B cell (primary cell): ENCODE measurements at regions of chr10 and their contacts with region 1.

Region 1: DNA sequence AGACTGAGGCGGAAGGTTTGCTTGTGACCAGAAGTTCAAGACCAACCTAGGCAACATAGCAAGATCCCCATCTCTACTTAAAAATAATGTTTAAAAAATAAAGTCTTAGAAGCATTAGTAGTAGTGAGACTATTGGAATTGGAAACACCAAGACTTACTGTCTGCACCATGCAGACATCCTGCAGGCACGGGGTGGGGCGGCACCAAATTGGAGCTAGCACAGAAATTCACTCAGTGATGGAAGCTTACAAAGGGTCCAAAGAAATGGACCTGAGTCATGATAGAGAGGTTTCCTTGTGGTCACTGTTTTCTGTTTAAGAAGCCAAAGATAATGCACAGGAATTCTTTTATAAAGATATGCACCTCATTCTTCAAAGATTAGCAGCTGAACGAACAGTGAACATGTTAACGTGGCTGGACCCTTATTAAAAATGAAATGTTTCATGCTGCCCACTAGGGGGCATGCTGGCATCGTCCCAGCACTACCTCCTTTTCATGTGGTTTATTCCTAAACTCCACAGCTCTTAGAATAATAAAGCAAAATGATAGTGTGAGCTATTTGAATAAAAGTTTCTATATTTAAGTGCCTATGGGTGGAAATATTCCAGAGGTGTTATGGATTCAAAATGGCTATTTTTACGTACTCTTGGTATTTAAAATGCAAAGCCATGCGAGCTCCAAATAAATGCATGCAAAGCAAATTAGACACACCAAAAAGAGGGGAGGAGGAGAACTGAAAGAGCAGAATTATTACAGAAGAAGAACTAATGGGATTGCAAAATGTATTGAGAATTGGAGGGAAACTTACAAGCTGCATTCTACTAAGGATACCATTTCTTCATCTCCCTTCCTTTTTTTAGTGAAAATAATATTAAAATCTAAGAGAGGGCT is 28.6 kb downstream of the PDSS1 start:
- DNase-seq: peak; percentile 74
- ATAC-seq: peak; percentile 72
- H3K4me3 ChIP-seq: no peak overlapping the region
- H3K4me3 Mint-ChIP-seq: no peak overlapping the region
- H3K27ac ChIP-seq: no peak overlapping the region
- H3K27ac Mint-ChIP-seq: no peak overlapping the region
- H3K4me1 ChIP-seq: peaks cover 0 to 15% of the 10 kb centered on the region in 2 donors
- H3K4me1 Mint-ChIP-seq: peaks cover 10% of the 10 kb centered on the region
- H3K27me3 ChIP-seq: no peaks in the 10 kb centered on the region
- H3K27me3 Mint-ChIP-seq: no peaks in the 10 kb centered on the region
- CTCF ChIP-seq: peak; percentile 98

Region 2: DNA sequence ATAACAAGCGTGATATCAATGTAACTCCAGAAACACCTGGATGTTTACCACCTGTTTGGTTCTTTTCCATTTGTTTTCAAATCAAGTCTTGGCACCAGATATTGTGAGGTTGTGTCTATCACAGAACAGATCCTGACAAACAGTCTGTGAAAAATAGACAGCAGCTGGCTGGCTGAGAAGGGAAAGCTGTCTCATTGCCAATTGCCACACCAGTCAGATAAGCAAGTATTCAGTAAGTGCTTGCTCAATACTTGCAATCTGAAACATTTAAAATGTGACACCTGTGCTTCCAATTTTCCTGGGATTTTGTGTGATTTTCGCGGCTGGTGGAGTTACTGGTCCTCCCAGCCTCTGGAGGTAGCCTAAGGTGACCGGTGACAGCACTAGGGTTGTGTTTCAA is 939.9 kb before region 1 on chr10:
- CTCF ChIA-PET with region 1: no interaction called
- POLR2A ChIA-PET with region 1: interaction called, 10 read pairs
- intact Hi-C with region 1: no loop called
- DNase-seq: no peak
- ATAC-seq: no peak
- H3K4me3 ChIP-seq: no peak overlapping the region
- H3K4me3 Mint-ChIP-seq: no peak overlapping the region
- H3K27ac ChIP-seq: no peak overlapping the region
- H3K27ac Mint-ChIP-seq: no peak overlapping the region
- H3K4me1 ChIP-seq: no peaks in the 10 kb centered on the region
- H3K4me1 Mint-ChIP-seq: no peaks in the 10 kb centered on the region
- H3K27me3 ChIP-seq: peaks cover 0 to 3% (median 1%) of the 10 kb centered on the region in 4 experiments
- H3K27me3 Mint-ChIP-seq: peaks cover 23% of the 10 kb centered on the region
- CTCF ChIP-seq: no peak

Region 3: DNA sequence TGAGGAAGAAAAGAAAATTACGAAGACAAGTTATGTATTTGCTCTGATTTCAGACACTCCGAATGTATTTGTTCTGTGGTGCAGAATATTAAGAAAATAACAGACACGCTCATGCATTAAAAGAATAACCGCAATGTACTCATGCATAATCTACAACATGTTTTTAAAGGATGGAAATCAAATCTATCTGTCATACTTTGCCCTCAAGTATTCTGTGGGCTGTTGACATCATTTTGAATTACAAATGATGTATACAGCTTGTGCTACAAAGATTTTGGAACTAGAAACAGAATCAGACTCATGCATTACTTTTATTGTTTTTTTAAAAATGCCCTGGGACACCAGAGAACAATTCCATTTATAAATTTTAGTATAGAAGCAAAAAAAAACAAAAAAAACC is 218.1 kb before region 1 on chr10:
- CTCF ChIA-PET with region 1: no interaction called
- POLR2A ChIA-PET with region 1: no interaction called
- intact Hi-C with region 1: no loop called
- DNase-seq: no peak
- ATAC-seq: no peak
- H3K4me3 ChIP-seq: no peak overlapping the region
- H3K4me3 Mint-ChIP-seq: no peak overlapping the region
- H3K27ac ChIP-seq: no peak overlapping the region
- H3K27ac Mint-ChIP-seq: no peak overlapping the region
- H3K4me1 ChIP-seq: no peaks in the 10 kb centered on the region
- H3K4me1 Mint-ChIP-seq: peaks cover 14% of the 10 kb centered on the region
- H3K27me3 ChIP-seq: no peaks in the 10 kb centered on the region
- H3K27me3 Mint-ChIP-seq: no peaks in the 10 kb centered on the region
- CTCF ChIP-seq: no peak

Region 4: DNA sequence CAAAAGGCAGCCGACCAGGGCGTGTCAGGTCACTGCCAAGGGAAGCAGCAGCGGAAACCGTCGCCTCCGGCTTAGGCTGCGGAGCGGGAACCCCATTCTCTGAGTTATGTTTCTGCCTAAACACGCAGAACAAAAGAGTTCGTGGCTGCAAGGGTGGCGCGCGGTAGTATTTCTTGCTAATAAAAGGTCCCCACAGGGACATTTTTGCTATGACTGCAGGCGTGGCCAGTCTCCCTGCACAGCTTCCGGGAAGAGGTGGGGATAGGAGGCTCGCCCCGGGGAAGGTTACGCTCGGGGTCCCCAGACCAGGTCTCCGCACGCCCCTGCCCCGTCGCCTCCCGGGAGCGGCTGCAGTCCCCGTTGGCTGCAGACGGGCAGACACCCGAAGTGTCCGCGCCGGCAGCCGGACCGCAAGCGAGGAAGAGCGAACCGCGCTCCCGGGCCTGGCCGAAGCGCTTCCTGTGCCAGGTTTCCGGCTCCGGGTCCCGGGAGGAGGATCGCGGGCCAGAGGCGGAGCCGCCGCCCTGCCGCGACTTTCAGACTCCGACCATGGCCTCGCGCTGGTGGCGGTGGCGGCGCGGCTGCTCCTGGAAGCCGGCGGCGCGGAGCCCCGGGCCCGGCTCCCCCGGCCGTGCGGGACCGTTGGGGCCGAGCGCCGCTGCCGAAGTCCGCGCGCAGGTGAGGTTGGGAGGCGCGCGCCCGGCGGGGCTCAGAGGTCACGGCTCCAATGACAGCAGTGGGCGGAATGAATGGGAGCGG is 28.7 kb before region 1 on chr10 and contains the start of gene PDSS1:
- CTCF ChIA-PET with region 1: interaction called, 10 read pairs
- POLR2A ChIA-PET with region 1: no interaction called
- intact Hi-C with region 1: no loop called
- DNase-seq: peak; percentile 75
- ATAC-seq: peak; percentile 87
- H3K4me3 ChIP-seq: peak within 1 kb of the TSS; percentile 49 to 95 (median 94)
- H3K4me3 Mint-ChIP-seq: peak within 1 kb of the TSS; percentile 93
- H3K27ac ChIP-seq: peak within 1 kb of the TSS; percentile 64 to 73
- H3K27ac Mint-ChIP-seq: peak within 1 kb of the TSS; percentile 90
- H3K4me1 ChIP-seq: peaks cover 10 to 13% of the 10 kb centered on the region in 2 donors
- H3K4me1 Mint-ChIP-seq: peaks cover 18% of the 10 kb centered on the region
- H3K27me3 ChIP-seq: no peaks in the 10 kb centered on the region
- H3K27me3 Mint-ChIP-seq: no peaks in the 10 kb centered on the region
- CTCF ChIP-seq: no peak
- total RNA-seq, gene PDSS1: 3.6 and 4.3 TPM in 2 replicates

Region 5: DNA sequence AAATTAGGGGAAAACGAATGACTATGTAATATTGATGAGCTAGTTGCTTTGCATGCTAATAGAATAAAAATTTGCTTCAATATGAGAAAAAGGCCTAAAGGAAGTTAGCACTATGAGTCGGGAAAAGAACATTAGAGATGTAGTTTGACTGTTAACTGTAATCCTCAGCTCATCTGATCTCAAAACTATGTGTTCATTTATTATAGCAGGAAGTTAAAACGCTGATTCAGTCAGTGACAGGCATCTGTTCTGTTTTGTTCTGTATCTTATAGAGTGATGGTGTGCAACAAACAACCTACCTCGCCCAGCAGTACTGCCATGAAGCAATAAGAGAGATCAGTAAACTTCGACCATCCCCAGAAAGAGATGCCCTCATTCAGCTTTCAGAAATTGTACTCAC is 20.0 kb after region 1 on chr10:
- CTCF ChIA-PET with region 1: interaction called, 12 read pairs
- POLR2A ChIA-PET with region 1: no interaction called
- intact Hi-C with region 1: no loop called
- DNase-seq: no peak
- ATAC-seq: no peak
- H3K4me3 ChIP-seq: no peak overlapping the region
- H3K4me3 Mint-ChIP-seq: no peak overlapping the region
- H3K27ac ChIP-seq: peak overlapping the region in 1 of 2 donors; percentile 40
- H3K27ac Mint-ChIP-seq: peak overlapping the region; percentile 21
- H3K4me1 ChIP-seq: peaks cover 0 to 12% of the 10 kb centered on the region in 2 donors
- H3K4me1 Mint-ChIP-seq: peaks cover 23% of the 10 kb centered on the region
- H3K27me3 ChIP-seq: no peaks in the 10 kb centered on the region
- H3K27me3 Mint-ChIP-seq: no peaks in the 10 kb centered on the region
- CTCF ChIP-seq: no peak

Region 6: DNA sequence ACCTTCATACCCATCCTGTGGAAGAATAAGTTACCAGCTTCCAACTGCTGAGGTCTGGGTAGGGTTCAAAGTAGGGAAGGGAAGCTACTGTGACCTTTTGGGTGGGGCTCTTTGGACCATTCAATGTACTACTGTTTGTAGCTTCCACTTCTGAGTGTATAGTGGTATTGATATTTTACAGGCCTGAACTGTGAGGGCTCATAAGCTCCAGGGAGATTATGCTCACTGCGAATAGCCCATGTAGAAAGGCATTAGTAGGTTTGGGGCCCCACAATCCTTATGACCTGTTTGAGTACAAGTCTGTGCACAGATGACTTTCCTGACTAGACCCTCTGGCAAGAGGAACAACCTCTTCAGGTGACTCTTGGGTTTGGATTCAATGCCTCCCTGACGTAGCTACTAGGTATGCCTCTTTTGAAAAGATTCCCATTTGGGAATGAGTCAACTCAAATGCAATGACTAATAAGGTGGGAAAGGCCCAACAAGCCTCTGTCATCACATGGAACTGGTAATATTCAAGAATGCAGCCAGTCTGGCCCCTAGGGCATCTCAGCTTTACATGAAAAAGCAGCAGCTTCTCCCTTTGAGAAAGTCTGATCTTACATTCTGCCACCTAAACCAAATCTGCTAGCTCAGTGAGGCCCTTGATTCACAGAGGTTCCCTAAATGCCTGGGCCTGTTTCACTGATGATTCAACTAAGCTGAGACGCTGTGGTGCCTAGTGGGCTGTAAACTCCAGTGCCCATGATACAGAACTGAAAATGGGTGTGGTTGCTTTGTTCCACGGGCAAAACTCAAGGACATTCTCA is 54.9 kb after region 1 on chr10:
- CTCF ChIA-PET with region 1: interaction called, 28 read pairs
- POLR2A ChIA-PET with region 1: no interaction called
- intact Hi-C with region 1: no loop called
- DNase-seq: peak; percentile 73
- ATAC-seq: peak; percentile 95
- H3K4me3 ChIP-seq: peak overlapping the region in 2 of 5 experiments; percentile 12 to 15
- H3K4me3 Mint-ChIP-seq: peak overlapping the region; percentile 71
- H3K27ac ChIP-seq: peak overlapping the region; percentile 69 to 81
- H3K27ac Mint-ChIP-seq: peak overlapping the region; percentile 78
- H3K4me1 ChIP-seq: peaks cover 42 to 56% of the 10 kb centered on the region in 2 donors
- H3K4me1 Mint-ChIP-seq: peaks cover 85% of the 10 kb centered on the region
- H3K27me3 ChIP-seq: no peaks in the 10 kb centered on the region
- H3K27me3 Mint-ChIP-seq: no peaks in the 10 kb centered on the region
- CTCF ChIP-seq: no peak

Region 7: DNA sequence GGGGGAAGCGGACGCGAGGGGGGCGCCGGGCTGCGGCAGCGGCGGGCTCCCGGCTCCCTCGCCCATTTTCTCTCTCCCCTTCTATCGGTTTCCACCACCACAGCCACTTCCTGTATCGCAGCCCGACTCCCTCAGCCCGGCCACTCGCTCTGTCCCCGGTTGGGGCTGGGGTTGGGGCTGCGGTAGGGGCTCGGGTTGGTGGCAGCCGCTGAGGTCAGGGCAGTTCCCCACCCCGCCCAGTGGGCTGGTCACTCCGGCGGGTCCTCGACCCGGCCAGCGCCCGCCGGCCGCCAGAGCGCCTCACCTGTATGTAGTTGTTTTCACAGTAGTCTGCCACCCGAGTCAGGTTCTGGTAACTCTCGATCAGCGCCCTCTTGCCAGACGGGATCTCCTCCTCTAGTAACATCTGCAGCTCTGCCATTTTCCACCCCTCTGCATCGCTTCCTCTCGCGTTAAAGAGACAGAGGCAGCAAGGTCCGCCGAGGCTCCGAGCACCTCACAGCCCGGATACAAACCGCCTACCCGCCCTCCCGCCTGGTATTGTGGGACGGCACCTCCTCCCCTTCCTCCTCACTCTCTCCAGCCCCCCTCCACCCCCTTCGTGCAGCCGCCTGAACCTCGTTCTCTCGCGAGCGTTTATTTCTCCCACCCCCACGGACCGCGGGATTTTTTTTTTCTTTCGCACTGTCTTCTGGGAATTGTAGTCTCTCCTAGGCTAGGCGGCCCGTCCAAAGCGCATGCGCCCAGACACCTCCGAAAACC is 134.5 kb after region 1 on chr10 and contains the start of gene ABI1:
- CTCF ChIA-PET with region 1: interaction called, 21 read pairs
- POLR2A ChIA-PET with region 1: interaction called, 4 read pairs
- intact Hi-C with region 1: loop called (anchors 1 kb)
- DNase-seq: peak; percentile 100
- ATAC-seq: peak; percentile 90
- H3K4me3 ChIP-seq: peak within 1 kb of the TSS; percentile 89 to 100 (median 99)
- H3K4me3 Mint-ChIP-seq: peak within 1 kb of the TSS; percentile 95
- H3K27ac ChIP-seq: peak within 1 kb of the TSS; percentile 88 to 94
- H3K27ac Mint-ChIP-seq: peak within 1 kb of the TSS; percentile 98
- H3K4me1 ChIP-seq: peaks cover 38% of the 10 kb centered on the region in 2 donors
- H3K4me1 Mint-ChIP-seq: peaks cover 34% of the 10 kb centered on the region
- H3K27me3 ChIP-seq: no peaks in the 10 kb centered on the region
- H3K27me3 Mint-ChIP-seq: no peaks in the 10 kb centered on the region
- CTCF ChIP-seq: no peak
- total RNA-seq, gene ABI1: 78.3 and 80.5 TPM in 2 replicates

Region 8: DNA sequence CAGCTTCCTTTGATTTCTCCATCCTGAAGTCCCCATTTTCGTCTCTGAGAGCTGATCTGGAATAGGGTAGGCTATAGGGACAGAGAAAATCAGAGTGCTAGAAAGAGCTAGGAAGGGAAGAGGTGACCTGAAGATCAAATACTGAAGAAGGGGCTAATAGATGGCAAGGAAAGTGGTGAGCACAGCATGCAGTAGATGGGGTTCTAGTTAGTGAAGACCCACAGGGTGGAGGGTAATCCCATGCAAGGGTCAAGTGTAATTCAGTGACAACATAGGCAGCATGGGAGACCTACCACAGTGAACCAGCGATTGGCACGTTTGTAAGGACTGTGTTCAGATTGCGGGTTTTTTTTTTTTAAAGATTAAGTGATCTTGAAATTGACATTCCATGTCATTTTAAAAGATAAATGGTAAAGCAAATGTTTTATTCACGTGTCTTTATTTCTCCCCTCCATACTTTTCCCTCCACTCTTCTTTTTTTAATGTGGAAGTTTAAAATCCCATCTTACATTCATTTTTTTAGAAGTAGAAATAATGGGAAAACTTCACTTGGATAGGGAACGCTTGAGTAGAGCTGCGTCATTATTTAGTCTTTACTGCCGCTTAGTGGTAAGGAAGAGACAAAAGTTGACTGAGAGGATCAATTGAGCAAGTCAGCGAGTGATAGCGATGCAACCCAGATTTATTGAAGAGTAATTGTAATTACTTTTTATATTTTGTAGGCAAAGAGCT is 155.7 kb after region 1 on chr10:
- CTCF ChIA-PET with region 1: interaction called, 452 read pairs
- POLR2A ChIA-PET with region 1: no interaction called
- intact Hi-C with region 1: loop called (anchors 1 kb)
- DNase-seq: peak; percentile 65
- ATAC-seq: peak; percentile 70
- H3K4me3 ChIP-seq: no peak overlapping the region
- H3K4me3 Mint-ChIP-seq: no peak overlapping the region
- H3K27ac ChIP-seq: no peak overlapping the region
- H3K27ac Mint-ChIP-seq: no peak overlapping the region
- H3K4me1 ChIP-seq: no peaks in the 10 kb centered on the region
- H3K4me1 Mint-ChIP-seq: peaks cover 1% of the 10 kb centered on the region
- H3K27me3 ChIP-seq: peaks cover 0 to 3% (median 1%) of the 10 kb centered on the region in 4 experiments
- H3K27me3 Mint-ChIP-seq: peaks cover 22% of the 10 kb centered on the region
- CTCF ChIP-seq: peak; percentile 80